ENCODE measurements at regions of chr16 and their contacts with region 1.

Region 1: GRCh38 chr16:68512183-68512582 is 26.9 kb upstream of the ZFP90 start:
- DNase-seq: peak in 1 of 3 donors; percentile 26
- H3K4me3 ChIP-seq: no peak overlapping the region
- H3K27ac ChIP-seq: no peak overlapping the region
- H3K4me1 ChIP-seq: peaks cover 0 to 25% (median 9%) of the 10 kb centered on the region in 4 experiments
- H3K27me3 ChIP-seq: peaks cover 0 to 2% (median 0%) of the 10 kb centered on the region in 5 experiments

Region 2: DNA sequence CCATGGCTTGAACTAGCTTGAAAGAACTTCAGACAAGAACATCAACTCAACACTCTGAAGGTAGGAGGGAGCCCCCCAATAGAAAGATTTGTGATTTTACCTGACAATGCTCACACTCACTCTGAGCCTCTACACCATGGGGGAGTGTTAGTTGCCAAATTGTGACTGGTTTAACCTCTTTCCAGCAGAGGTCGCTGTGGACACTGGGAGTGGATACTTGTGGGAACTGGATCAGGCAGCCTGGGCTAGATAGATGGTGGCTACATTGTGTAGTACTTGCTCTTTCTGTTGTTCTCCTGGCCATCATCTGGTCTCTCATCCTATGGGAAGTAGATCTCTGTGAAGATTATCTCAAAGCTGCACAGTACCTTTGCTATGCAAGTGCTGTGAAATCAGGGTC is 66.7 kb before region 1 on chr16:
- CTCF ChIA-PET with region 1: interaction called, 37 read pairs
- POLR2A ChIA-PET with region 1: no interaction called
- DNase-seq: peak; percentile 69 to 88 (median 82)
- H3K4me3 ChIP-seq: no peak overlapping the region
- H3K27ac ChIP-seq: no peak overlapping the region
- H3K4me1 ChIP-seq: peaks cover 0 to 19% (median 11%) of the 10 kb centered on the region in 4 experiments
- H3K27me3 ChIP-seq: peaks cover 6 to 34% (median 17%) of the 10 kb centered on the region in 5 experiments

Region 3: DNA sequence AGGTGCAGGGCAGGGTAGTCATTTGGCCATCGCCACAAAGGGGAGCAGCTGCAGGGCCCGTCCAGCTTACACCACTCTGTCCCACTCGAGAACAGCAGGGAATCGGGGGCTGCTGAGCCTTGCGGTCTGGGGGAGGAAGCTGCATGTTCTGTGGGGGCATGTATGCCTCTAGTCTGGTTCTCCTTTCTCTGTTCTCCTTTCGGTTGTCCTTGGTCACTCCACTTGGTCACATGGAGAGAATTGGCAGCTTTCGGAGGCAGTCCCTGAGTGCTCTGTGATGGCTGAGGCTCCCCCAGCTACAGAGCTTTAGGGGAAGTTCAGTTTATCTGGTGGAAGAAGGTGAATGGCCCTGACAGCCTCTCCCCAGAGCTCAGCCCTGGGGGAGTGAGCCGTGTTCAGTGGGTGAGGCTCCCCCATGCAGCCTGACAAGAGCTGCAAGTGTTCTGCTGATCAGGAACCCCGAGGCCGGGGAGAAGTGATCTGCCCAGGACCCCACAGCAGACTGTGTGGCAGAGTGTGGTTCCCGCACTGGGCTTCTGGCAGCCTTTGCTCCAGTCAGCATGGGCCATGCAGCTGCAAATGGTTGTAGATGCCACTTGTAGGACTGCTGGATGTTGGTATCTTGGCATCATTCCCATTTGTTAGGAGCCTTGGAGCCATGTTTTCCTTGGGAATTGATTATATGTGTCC is 41.6 kb before region 1 on chr16:
- CTCF ChIA-PET with region 1: interaction called, 19 read pairs
- POLR2A ChIA-PET with region 1: no interaction called
- DNase-seq: peak; percentile 75 to 98 (median 96)
- H3K4me3 ChIP-seq: peak overlapping the region in 6 of 7 experiments; percentile 44 to 74 (median 54)
- H3K27ac ChIP-seq: peak overlapping the region in 1 of 2 experiments; percentile 51
- H3K4me1 ChIP-seq: peaks cover 17 to 77% (median 43%) of the 10 kb centered on the region in 4 experiments
- H3K27me3 ChIP-seq: no peaks in the 10 kb centered on the region

Region 4: GRCh38 chr16:68499006-68499405 is 13.2 kb before region 1 on chr16:
- CTCF ChIA-PET with region 1: interaction called, 10 read pairs
- POLR2A ChIA-PET with region 1: no interaction called
- DNase-seq: peak; percentile 17 to 49 (median 48)
- H3K4me3 ChIP-seq: peak overlapping the region in 2 of 7 experiments; percentile 15 to 18
- H3K27ac ChIP-seq: no peak overlapping the region
- H3K4me1 ChIP-seq: peaks cover 0 to 11% (median 10%) of the 10 kb centered on the region in 4 experiments
- H3K27me3 ChIP-seq: no peaks in the 10 kb centered on the region

Region 5: DNA sequence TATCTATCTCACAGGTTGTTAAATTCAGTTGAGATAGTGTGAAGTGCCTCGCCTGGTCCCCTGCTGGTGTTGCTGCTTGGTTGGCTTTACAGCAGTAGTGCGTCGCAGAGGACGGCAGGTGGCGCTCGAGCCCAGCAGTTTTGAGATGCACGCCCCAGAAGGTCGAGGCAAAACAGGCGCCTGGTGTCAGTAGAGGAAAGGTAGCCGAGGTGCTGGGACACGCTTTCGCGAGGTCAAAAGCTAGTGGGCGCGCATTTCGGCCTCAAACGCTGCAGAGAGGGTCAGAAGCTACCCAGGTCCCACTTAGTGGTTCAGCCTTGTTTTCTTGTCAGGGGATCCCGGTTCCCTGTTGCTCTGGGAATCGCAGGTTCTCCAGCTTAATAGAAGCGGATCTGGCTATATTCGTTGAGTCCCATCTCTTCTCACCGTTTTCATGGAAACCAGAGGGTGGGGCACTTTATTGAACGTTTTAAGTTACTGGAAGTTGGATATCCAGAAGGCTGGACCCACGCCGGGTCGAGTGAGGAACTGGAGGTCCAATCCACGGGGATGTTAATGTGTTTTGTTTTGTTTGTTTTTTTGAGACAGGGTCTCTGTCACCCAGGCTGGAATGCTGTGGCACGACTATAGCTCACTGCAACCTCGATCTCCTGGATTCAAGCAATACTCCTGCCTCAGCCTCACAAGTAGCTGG is 16.6 kb after region 1 on chr16:
- CTCF ChIA-PET with region 1: interaction called, 23 read pairs
- POLR2A ChIA-PET with region 1: no interaction called
- DNase-seq: peak; percentile 82 to 91 (median 89)
- H3K4me3 ChIP-seq: peak overlapping the region in 1 of 7 experiments; percentile 10
- H3K27ac ChIP-seq: no peak overlapping the region
- H3K4me1 ChIP-seq: peaks cover 0 to 20% (median 14%) of the 10 kb centered on the region in 4 experiments
- H3K27me3 ChIP-seq: peaks cover 0 to 9% (median 0%) of the 10 kb centered on the region in 5 experiments

Measured in common myeloid progenitor, CD34-positive (primary cell).